ENCODE measurements at regions of chr15 and their contacts with region 1.

Region 1: DNA sequence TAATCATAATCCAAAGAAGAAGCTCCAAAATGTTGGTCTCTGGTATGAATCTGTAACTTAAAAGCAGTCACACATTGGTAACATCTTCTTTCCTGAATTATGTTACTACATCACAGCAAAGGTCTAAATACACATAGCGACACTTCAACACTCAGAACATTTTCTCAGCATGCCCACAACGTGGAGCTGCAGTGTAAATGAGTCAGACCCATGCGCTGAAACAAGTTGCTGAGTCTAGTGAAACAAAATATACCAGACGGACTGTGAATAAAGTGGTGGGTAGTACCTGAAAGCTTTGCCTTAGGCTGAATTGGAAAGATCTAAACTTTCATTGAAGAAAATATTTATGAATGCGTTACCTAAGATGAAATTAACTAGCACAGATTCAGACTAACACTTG is 33.2 kb upstream of the GOLGA8B start:
- DNase-seq: no peak
- H3K4me3 Mint-ChIP-seq: no peak overlapping the region
- H3K27ac Mint-ChIP-seq: no peak overlapping the region
- H3K4me1 Mint-ChIP-seq: no peaks in the 10 kb centered on the region
- H3K27me3 Mint-ChIP-seq: peaks cover 60% of the 10 kb centered on the region

Region 2: GRCh38 chr15:34927726-34928125 is 311.1 kb after region 1 on chr15:
- intact Hi-C with region 1: loop called (anchors 5 kb)
- DNase-seq: no peak
- H3K4me3 Mint-ChIP-seq: no peak overlapping the region
- H3K27ac Mint-ChIP-seq: no peak overlapping the region
- H3K4me1 Mint-ChIP-seq: peaks cover 7% of the 10 kb centered on the region
- H3K27me3 Mint-ChIP-seq: no peaks in the 10 kb centered on the region

Region 3: DNA sequence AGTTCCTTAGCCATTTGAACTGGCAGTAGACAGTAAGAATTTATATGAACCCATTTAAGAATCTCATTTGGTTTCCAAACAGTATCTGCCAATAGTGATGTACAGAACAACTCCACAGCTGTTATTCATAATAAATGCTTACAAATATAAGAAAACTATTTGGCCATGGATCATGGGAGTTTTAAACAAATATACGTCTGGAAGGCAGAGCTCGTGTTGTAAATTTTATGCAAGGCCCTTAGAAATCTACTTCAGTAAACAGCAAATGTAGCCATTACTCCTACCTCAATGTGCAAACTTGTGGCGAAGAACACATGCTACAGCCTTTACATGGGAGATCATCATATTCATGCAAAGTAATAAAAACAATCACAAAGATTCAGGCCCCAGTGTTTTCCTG is 533.7 kb after region 1 on chr15:
- intact Hi-C with region 1: no loop called
- DNase-seq: no peak
- H3K4me3 Mint-ChIP-seq: no peak overlapping the region
- H3K27ac Mint-ChIP-seq: no peak overlapping the region
- H3K4me1 Mint-ChIP-seq: no peaks in the 10 kb centered on the region
- H3K27me3 Mint-ChIP-seq: no peaks in the 10 kb centered on the region

Measured in activated CD4-positive, alpha-beta T cell treated with anti-CD3 and anti-CD28 coated beads, Interleukin-2, amount 10 ng/mL, durations not matched to agents 24 days and 14 days (primary cell).